ENCODE measurements at regions of chr5 and their contacts with region 1.

Region 1: DNA sequence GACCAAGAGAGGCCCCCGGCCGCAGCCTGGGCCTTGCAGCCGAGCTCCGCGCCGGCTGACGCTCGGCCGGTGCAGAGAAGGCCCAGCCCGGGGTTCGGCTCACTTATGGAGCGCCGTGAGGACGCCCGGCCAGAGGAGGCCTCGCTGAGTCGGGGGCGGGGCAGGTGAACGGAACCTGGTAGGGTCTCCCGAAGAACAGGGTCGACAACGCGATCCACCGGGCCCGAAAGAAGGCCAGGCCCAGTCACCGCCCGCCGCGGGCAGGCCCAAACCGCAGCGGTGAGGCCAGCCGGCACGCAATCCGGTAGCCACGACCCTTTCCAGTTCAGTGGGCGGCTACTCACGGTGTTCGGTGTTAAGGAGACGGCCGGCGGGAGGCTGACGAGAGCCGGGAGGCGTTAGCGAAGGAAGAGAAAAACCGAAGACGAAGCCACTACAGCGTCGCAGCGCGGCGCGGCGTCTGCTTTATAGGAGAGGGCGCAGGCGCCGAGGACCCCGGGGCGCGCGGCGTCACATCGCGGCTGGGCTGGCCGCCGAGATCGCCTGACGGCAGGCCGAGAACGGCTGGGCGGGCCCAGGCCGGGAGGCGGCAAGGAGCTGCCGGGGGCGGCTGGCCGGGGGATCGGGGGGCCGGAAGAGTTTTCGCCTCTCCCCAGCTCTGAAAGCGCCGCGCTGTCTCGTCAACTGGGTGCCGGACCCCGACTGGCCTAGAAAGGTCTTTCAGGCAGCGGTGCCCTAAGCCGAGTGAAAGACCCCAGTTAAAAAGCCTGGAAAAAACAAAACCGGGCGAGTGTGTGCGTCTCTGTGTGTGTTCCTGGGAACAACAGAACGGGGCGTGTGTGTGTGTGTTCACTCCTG is at the start of gene SKP1:
- DNase-seq: peak; percentile 89 to 93 (median 90)
- ATAC-seq: peak; percentile 89
- H3K4me3 ChIP-seq: peak within 1 kb of the TSS; percentile 98
- H3K27ac ChIP-seq: peak within 1 kb of the TSS; percentile 97
- H3K4me1 ChIP-seq: peaks cover 17 to 18% of the 10 kb centered on the region in 2 experiments
- H3K27me3 ChIP-seq: no peaks in the 10 kb centered on the region
- CTCF ChIP-seq: no peak
- EP300 ChIP-seq: no peak
- POLR2A ChIP-seq: peak; percentile 99
- RAD21 ChIP-seq: no peak
- polyA plus RNA-seq, gene SKP1: 2,075 to 2,109 TPM

Region 2: DNA sequence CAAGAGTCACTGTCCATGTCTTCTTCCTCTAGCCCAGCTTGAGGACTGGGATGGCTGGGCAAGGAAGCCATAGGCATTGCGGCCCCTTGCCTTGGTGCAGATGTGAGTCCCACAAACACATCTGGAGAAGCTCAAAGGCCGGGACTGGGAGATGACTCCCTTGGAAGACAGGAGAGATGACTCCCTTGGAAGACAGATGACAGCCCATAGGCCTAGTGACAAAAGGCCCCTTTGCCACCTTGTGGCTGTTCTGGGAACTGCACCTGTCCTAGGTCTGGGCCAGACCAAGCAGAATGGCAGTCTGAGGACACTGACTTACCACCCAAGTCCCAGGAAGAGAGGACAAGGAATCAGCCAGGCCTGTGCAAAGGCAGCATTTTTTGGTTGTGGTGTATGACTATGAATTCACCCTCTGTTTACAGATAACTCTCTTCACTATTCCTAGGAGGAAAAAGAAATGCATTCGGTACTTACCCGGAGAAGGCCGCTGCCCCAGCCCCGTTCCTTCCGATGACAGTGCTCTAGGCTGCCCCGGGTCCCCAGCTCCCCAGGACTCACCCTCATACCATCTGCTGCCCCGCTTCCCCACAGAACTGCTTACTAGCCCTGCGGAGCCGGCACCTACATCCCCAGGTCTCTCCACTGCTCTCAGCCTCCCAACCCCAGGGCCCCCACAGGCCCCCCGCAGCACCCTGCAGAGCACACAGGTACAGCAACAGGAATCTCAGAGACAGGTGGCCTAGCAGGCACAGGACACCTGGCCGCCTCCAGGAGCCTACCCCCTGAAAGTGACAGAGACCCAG is 30.8 kb before region 1 on chr5:
- CTCF ChIA-PET with region 1: no interaction called
- POLR2A ChIA-PET with region 1: interaction called, 14 read pairs
- in situ Hi-C with region 1: no loop called
- intact Hi-C with region 1: no loop called
- DNase-seq: peak; percentile 66 to 86 (median 68)
- ATAC-seq: peak; percentile 91
- H3K4me3 ChIP-seq: no peak overlapping the region
- H3K27ac ChIP-seq: no peak overlapping the region
- H3K4me1 ChIP-seq: peaks cover 4 to 20% of the 10 kb centered on the region in 2 experiments; a peak in 4 of 5 replicates
- H3K27me3 ChIP-seq: no peaks in the 10 kb centered on the region
- CTCF ChIP-seq: peak; percentile 85 to 93 (median 92)
- EP300 ChIP-seq: no peak
- POLR2A ChIP-seq: no peak
- RAD21 ChIP-seq: peak; percentile 41 to 64; a peak in 3 of 4 replicates

Region 3: GRCh38 chr5:134153657-134154056 is 23.1 kb before region 1 on chr5:
- CTCF ChIA-PET with region 1: no interaction called
- POLR2A ChIA-PET with region 1: interaction called, 12 read pairs
- in situ Hi-C with region 1: no loop called
- intact Hi-C with region 1: no loop called
- DNase-seq: no peak
- ATAC-seq: no peak
- H3K4me3 ChIP-seq: no peak overlapping the region
- H3K27ac ChIP-seq: no peak overlapping the region
- H3K4me1 ChIP-seq: no peaks in the 10 kb centered on the region; a peak in 1 of 5 replicates
- H3K27me3 ChIP-seq: no peaks in the 10 kb centered on the region
- CTCF ChIP-seq: no peak
- EP300 ChIP-seq: no peak
- POLR2A ChIP-seq: no peak
- RAD21 ChIP-seq: no peak

Region 4: GRCh38 chr5:134161513-134162395 is 15.0 kb before region 1 on chr5:
- CTCF ChIA-PET with region 1: no interaction called
- POLR2A ChIA-PET with region 1: interaction called, 22 read pairs
- in situ Hi-C with region 1: no loop called
- intact Hi-C with region 1: no loop called
- DNase-seq: no peak
- ATAC-seq: no peak
- H3K4me3 ChIP-seq: no peak overlapping the region
- H3K27ac ChIP-seq: no peak overlapping the region
- H3K4me1 ChIP-seq: no peaks in the 10 kb centered on the region
- H3K27me3 ChIP-seq: no peaks in the 10 kb centered on the region
- CTCF ChIP-seq: no peak
- EP300 ChIP-seq: no peak
- POLR2A ChIP-seq: no peak
- RAD21 ChIP-seq: no peak

Region 5: GRCh38 chr5:134209477-134210240 is 32.9 kb after region 1 on chr5:
- CTCF ChIA-PET with region 1: no interaction called
- POLR2A ChIA-PET with region 1: interaction called, 10 read pairs
- in situ Hi-C with region 1: no loop called
- intact Hi-C with region 1: no loop called
- DNase-seq: no peak
- ATAC-seq: no peak
- H3K4me3 ChIP-seq: no peak overlapping the region
- H3K27ac ChIP-seq: no peak overlapping the region
- H3K4me1 ChIP-seq: no peaks in the 10 kb centered on the region; a peak in 1 of 5 replicates
- H3K27me3 ChIP-seq: no peaks in the 10 kb centered on the region
- CTCF ChIP-seq: no peak
- EP300 ChIP-seq: no peak
- POLR2A ChIP-seq: no peak
- RAD21 ChIP-seq: no peak

Region 6: DNA sequence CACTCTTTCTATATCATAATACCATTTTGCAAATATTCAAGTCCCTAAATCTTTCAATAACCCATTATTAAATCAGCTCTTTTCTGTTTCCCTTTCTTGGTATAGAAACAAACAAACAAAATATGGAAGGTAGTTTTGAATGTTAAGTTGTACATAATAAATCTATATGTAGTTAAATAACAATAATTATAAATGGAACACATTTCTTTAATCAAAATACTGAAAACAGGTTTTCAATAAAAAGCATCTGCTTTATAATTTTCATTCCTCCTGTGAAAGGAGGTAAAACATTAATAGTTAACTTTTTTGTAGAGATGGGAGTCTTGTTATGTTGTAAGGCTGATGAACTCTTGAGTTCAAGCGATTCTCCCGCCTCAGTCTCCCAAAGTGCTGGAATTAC is 136.1 kb after region 1 on chr5:
- CTCF ChIA-PET with region 1: no interaction called
- POLR2A ChIA-PET with region 1: no interaction called
- in situ Hi-C with region 1: no loop called
- intact Hi-C with region 1: no loop called
- DNase-seq: no peak
- ATAC-seq: no peak
- H3K4me3 ChIP-seq: no peak overlapping the region
- H3K27ac ChIP-seq: no peak overlapping the region
- H3K4me1 ChIP-seq: no peaks in the 10 kb centered on the region
- H3K27me3 ChIP-seq: no peaks in the 10 kb centered on the region
- CTCF ChIP-seq: no peak
- EP300 ChIP-seq: no peak
- POLR2A ChIP-seq: no peak
- RAD21 ChIP-seq: no peak

Region 7: GRCh38 chr5:134370871-134371833 is 194.4 kb after region 1 on chr5 and contains the start of gene UBE2B:
- CTCF ChIA-PET with region 1: no interaction called
- POLR2A ChIA-PET with region 1: interaction called, 5 read pairs
- in situ Hi-C with region 1: no loop called
- intact Hi-C with region 1: loop called (anchors 2 kb)
- DNase-seq: peak; percentile 91 to 100 (median 94)
- ATAC-seq: peak; percentile 80
- H3K4me3 ChIP-seq: peak within 1 kb of the TSS; percentile 81
- H3K27ac ChIP-seq: peak within 1 kb of the TSS; percentile 99
- H3K4me1 ChIP-seq: peaks cover 5 to 9% of the 10 kb centered on the region in 2 experiments; a peak in 3 of 5 replicates
- H3K27me3 ChIP-seq: no peaks in the 10 kb centered on the region
- CTCF ChIP-seq: no peak
- EP300 ChIP-seq: peak; percentile 52
- POLR2A ChIP-seq: peak; percentile 65
- RAD21 ChIP-seq: no peak
- polyA plus RNA-seq, gene UBE2B: 165 to 198 TPM

Region 8: GRCh38 chr5:134411546-134412266 is 235.0 kb after region 1 on chr5 and contains the start of gene CDKN2AIPNL:
- CTCF ChIA-PET with region 1: no interaction called
- POLR2A ChIA-PET with region 1: no interaction called
- in situ Hi-C with region 1: no loop called
- intact Hi-C with region 1: no loop called
- DNase-seq: peak; percentile 89 to 92 (median 91)
- ATAC-seq: peak; percentile 99
- H3K4me3 ChIP-seq: peak within 1 kb of the TSS; percentile 84
- H3K27ac ChIP-seq: peak within 1 kb of the TSS; percentile 73
- H3K4me1 ChIP-seq: peaks cover 18 to 25% of the 10 kb centered on the region in 2 experiments
- H3K27me3 ChIP-seq: no peaks in the 10 kb centered on the region
- CTCF ChIP-seq: peak; percentile 67 to 92 (median 79)
- EP300 ChIP-seq: peak; percentile 41; the same call in 1 of the 2 replicates
- POLR2A ChIP-seq: peak; percentile 95
- RAD21 ChIP-seq: peak; percentile 49 to 60
- polyA plus RNA-seq, gene CDKN2AIPNL: 19.9 to 30.7 TPM

Region 9: DNA sequence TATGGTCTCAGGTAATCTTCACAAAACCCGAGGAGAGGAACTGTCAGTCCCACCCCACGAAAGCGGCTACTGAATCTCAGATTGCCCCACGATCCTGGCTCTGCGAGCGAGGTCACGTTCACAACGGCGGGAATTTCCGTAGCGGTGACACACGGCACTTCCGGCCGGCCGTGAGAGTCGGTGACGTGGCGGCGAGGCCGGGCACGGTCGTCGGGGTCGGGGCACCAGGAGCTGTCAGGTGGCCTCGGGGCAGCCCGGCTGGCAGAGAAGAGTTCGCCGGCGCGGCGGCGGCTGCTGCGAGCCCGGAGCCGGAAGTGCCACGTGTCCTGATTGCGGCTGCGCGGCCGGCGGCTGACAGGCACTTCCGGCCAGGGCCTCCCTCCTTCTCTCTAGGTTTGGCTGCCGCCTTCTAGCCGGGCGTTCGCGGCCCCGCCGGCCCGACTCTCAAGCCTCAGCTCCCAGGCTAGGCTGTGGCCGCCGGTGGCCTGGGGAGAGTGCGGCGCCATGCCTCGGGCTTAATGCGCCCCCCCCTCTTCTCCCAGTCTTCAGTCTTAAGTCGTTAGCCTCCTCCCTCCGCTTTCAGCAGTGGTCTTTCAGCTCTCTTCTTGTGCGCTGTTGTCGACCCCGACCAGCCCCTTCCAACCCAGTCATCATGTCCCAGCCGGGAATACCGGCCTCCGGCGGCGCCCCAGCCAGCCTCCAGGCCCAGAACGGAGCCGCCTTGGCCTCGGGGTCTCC is 471.9 kb after region 1 on chr5 and contains the start of gene SEC24A:
- CTCF ChIA-PET with region 1: no interaction called
- POLR2A ChIA-PET with region 1: interaction called, 3 read pairs
- in situ Hi-C with region 1: no loop called
- intact Hi-C with region 1: loop called (anchors 2 kb)
- DNase-seq: peak; percentile 89 to 91 (median 90)
- ATAC-seq: peak; percentile 91
- H3K4me3 ChIP-seq: peak within 1 kb of the TSS; percentile 95
- H3K27ac ChIP-seq: peak within 1 kb of the TSS; percentile 97
- H3K4me1 ChIP-seq: peaks cover 0 to 15% of the 10 kb centered on the region in 2 experiments; a peak in 1 of 5 replicates
- H3K27me3 ChIP-seq: no peaks in the 10 kb centered on the region
- CTCF ChIP-seq: 0 out of 6 replicates have a peak, but pooled peaks of 1 of the 3 experiments have one; percentile 0
- EP300 ChIP-seq: 0 out of 2 replicates have a peak, but pooled peaks have one; percentile 1
- POLR2A ChIP-seq: peak; percentile 89
- RAD21 ChIP-seq: no peak
- polyA plus RNA-seq, gene SEC24A: 7.9 to 11.1 TPM